Sigmoid colon (tissue), 7 donors: ENCODE measurements at regions of chr14 and their contacts with region 1.

Region 1: DNA sequence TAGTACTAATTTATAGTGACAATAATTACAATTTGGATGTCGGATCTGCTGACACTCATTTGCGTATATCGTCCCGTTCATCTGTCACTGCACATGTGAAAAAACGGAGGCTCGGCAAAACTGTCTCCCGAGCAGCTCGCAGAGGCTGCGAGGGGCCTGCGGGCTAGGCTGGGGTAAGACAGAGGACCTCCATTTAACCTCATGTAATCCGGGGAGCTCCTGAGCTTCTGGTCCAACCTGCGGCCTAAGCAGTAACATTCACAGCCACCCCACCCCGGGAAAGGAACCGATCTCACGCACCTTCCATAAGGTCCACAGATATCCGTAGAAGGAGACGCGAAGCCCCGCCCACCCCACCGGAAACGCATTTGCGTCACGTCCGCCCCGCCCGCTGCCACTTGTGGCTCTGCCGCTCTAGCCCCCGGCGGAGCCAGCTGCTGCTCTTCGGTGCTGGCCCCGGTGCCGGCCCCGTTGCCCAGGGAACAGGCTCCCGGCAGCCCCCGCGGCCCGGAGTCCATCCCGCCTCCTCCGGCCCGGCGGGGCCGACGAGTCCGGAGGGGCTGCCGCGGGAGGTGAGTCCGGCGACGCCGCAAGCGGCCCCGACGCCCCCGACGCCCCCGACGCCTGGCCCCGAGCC is at the starts of genes CINP and TECPR2:
- DNase-seq: peak; percentile 99
- H3K4me3 ChIP-seq: peak within 1 kb of the TSS; percentile 68 to 93 (median 88)
- H3K27ac ChIP-seq: peak within 1 kb of the TSS; percentile 89 to 99 (median 96)
- H3K4me1 ChIP-seq: peaks cover 0 to 37% (median 25%) of the 10 kb centered on the region in 4 donors
- H3K27me3 ChIP-seq: no peaks in the 10 kb centered on the region
- CTCF ChIP-seq: no peak
- EP300 ChIP-seq: no peak
- POLR2A ChIP-seq: peak; percentile 18 to 46
- total RNA-seq, gene CINP: 12.5 to 24.6 (median 19.8) TPM
- total RNA-seq, gene TECPR2: 15.3 to 51.0 (median 17.2) TPM

Region 2: GRCh38 chr14:102043251-102044025 is 319.2 kb before region 1 on chr14:
- intact Hi-C with region 1: no loop called
- DNase-seq: no peak
- H3K4me3 ChIP-seq: no peak overlapping the region
- H3K27ac ChIP-seq: peak overlapping the region in 1 of 4 donors; percentile 70
- H3K4me1 ChIP-seq: peaks cover 0 to 15% (median 11%) of the 10 kb centered on the region in 4 donors
- H3K27me3 ChIP-seq: no peaks in the 10 kb centered on the region
- CTCF ChIP-seq: no peak
- EP300 ChIP-seq: no peak
- POLR2A ChIP-seq: no peak

Region 3: DNA sequence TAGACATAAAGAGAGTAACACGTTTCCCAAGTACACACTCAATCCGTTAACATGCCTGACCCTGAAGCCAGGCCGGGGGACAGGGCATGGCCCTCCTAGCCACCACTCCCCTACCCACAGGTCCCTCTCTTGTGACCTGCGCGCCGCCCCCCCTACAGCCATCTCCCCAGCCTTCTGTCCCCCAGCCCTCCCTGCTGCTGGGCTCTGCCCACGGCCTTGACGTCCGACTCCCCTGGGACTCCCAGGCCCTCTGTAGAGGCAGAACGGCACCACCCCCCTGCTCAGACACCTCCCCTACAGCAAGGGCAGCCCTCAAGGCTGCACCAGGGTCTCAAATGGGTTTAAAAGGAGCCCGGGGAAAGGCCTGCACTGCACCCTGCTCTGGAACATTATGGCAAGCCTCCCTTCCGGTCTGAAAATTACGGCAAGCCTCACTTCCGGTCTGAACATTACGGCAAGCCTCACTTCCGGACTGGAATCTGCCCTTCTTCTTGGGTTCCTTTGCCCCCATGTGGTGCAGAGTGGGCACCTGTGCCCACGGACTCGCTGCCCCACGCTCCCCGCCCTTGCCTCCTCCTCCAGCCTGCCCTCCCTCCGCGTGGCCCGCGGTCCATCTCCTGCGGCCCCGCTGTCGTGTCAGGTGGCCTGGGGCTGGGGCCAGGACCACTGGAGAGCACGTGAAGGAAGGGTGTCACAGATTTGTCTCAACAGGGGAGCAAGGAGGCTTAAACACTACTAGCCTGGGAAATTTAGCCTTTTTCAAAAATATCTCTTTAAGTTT is 135.3 kb before region 1 on chr14:
- intact Hi-C with region 1: no loop called
- DNase-seq: no peak
- H3K4me3 ChIP-seq: no peak overlapping the region
- H3K27ac ChIP-seq: no peak overlapping the region
- H3K4me1 ChIP-seq: no peaks in the 10 kb centered on the region
- H3K27me3 ChIP-seq: no peaks in the 10 kb centered on the region
- CTCF ChIP-seq: no peak
- EP300 ChIP-seq: no peak
- POLR2A ChIP-seq: no peak

Region 4: DNA sequence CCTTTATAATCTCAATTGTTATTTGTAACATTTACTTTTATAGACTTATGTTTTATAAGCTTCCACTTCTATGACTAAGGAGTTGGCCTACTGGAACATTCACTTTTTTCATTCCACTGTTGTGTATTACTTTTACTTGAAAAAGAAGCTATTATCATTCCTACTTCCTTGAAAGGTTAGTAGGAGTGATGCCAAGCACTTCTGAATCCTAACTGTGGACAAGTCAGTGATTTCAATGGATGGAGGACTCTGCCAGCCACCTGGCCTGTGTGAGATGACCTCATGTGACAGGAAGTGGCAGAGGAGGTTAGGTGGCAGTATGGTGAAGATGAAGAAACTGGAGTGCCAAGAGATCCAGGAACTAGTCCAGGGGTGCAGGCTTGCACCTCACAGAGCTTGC is 46.1 kb after region 1 on chr14:
- intact Hi-C with region 1: loop called (anchors 2 kb)
- DNase-seq: no peak
- H3K4me3 ChIP-seq: no peak overlapping the region
- H3K27ac ChIP-seq: peak overlapping the region; percentile 72 to 90 (median 81)
- H3K4me1 ChIP-seq: peaks cover 0 to 28% (median 27%) of the 10 kb centered on the region in 4 donors
- H3K27me3 ChIP-seq: no peaks in the 10 kb centered on the region
- CTCF ChIP-seq: no peak
- EP300 ChIP-seq: no peak
- POLR2A ChIP-seq: no peak

Region 5: DNA sequence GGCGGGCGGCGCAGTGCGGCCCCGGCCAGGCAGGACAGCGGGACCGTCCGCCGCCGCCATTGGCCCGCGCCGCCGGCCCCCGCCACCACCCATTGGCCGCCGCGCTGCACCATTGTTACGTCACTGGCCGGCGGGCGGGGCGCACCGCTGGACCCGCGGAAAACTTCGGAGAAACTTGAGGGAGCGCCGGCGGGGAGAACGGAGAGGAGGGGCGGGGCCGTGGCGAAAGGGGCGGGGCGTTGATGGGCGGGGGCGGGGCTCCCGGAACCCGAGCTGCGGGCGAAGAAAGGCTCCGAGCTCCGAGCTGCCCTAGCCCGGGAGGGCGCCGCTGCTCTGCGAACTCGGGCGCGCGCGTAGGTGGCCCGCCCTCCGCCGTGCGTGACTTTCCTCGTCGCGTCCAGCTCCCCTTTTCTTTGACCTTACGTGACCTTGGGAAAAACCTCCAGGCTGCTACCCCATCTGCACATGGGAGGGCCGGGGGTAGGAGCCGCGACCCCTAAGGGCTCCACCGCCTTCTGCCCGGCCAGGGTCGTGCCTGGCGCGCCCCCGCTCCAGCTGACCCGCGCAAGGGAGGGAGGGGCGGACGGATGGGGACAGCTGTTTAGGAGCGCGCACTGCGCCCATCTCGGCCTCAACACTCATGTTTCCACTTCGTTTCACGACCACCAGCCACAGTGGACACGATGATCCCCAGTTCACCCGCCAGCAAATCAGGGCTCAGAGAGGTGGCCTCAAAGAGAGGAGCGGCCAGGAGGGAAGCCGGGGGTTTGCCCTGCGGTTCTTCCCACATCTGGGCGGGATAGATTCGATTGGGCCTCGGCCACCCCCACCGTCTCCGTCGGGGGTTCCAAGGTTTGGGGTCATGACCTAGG is 147.3 kb after region 1 on chr14 and contains the start of gene ANKRD9:
- intact Hi-C with region 1: loop called (anchors 5 kb)
- DNase-seq: peak; percentile 98
- H3K4me3 ChIP-seq: peak within 1 kb of the TSS; percentile 48 to 70 (median 62)
- H3K27ac ChIP-seq: peak within 1 kb of the TSS; percentile 88 to 92 (median 90)
- H3K4me1 ChIP-seq: peaks cover 0 to 19% (median 14%) of the 10 kb centered on the region in 4 donors
- H3K27me3 ChIP-seq: no peaks in the 10 kb centered on the region
- CTCF ChIP-seq: no peak
- EP300 ChIP-seq: no peak
- POLR2A ChIP-seq: peak; percentile 11 to 70
- total RNA-seq, gene ANKRD9: 16.1 to 36.0 (median 23.4) TPM